ENCODE measurements at regions of chr1 and their contacts with region 1.

Region 1: GRCh38 chr1:155084722-155085503 is 6.3 kb downstream of the EFNA3 start:
- DNase-seq: peak; percentile 94
- H3K4me3 ChIP-seq: peak overlapping the region; percentile 77 to 79
- H3K27ac ChIP-seq: peak overlapping the region; percentile 69 to 94
- H3K4me1 ChIP-seq: peaks cover 13 to 26% of the 10 kb centered on the region in 2 experiments; a peak in 3 of 4 replicates
- H3K27me3 ChIP-seq: peaks cover 15% of the 10 kb centered on the region
- CTCF ChIP-seq: peak; percentile 82
- EP300 ChIP-seq: peak in 1 of 2 experiments; percentile 26; a peak in 1 of 4 replicates
- RAD21 ChIP-seq: peak; percentile 96

Region 2: DNA sequence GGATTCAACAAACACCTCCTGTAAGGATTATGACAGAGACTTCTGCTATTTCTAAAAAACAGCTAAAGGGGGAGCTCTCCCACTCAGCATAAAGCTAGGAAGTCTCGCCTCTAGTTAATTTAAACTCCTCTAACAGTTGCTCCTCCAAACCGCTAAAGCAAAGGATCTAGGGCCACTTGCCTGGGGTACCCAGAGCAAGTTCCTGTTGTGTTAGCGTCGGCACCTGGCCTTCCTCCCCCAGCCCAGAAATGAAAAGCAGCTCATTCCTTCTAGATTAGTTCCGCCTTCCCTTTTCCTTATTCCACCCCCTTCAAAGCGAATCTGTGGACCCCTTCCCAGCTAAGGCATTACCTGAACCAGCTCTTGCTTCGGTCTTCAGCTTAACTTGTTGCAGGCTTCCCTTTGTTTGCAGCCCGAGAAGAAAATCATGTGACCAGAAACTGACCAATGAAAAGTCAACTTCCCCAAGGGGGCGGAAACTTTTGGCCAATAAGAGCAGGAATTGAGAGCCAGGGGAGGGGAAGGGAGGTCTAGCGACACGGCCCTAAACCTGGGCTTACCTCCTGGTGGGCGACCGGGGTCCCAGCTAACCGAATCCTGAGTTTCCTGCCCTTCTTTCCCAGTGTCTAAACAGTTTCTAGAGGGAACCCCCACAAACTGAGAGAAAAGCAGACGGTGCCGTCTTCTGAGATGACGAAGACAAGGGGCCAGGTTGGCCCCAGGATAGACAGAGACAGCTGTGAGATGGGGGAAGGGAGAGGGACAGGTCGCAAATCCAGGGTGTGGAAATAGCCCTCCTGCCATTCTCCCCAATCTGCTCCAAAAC is 129.0 kb before region 1 on chr1 and contains the start of gene PBXIP1:
- CTCF ChIA-PET with region 1: interaction called, 21 read pairs
- POLR2A ChIA-PET with region 1: no interaction called
- DNase-seq: peak; percentile 94
- H3K4me3 ChIP-seq: peak within 1 kb of the TSS; percentile 74 to 79
- H3K27ac ChIP-seq: peak within 1 kb of the TSS; percentile 90 to 91
- H3K4me1 ChIP-seq: peaks cover 0 to 51% of the 10 kb centered on the region in 2 experiments; a peak in 3 of 4 replicates
- H3K27me3 ChIP-seq: no peaks in the 10 kb centered on the region
- CTCF ChIP-seq: peak; percentile 53
- EP300 ChIP-seq: no peak
- RAD21 ChIP-seq: peak; percentile 55
- polyA plus RNA-seq, gene PBXIP1: 55.9 and 64.3 TPM in 2 replicates

Region 3: DNA sequence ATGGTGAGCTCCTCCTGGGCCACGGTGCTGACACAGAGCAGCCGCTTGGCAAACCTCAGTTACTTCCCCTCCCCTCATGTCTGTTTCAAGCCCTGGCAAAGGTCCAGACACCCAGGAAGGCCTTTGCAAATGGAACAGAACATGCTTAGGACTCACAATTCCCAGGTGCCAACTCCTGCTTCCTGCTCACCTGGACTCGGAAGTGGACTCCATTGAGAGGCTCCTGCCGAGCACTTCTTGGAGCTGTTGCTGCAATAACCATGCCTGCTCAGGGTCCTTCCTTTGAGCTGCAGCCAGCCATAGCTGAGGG is 62.0 kb before region 1 on chr1:
- CTCF ChIA-PET with region 1: interaction called, 15 read pairs
- POLR2A ChIA-PET with region 1: no interaction called
- DNase-seq: peak; percentile 57
- H3K4me3 ChIP-seq: no peak overlapping the region
- H3K27ac ChIP-seq: no peak overlapping the region
- H3K4me1 ChIP-seq: peaks cover 0 to 4% of the 10 kb centered on the region in 2 experiments; a peak in 1 of 4 replicates
- H3K27me3 ChIP-seq: no peaks in the 10 kb centered on the region
- CTCF ChIP-seq: no peak
- EP300 ChIP-seq: no peak
- RAD21 ChIP-seq: no peak

Region 4: GRCh38 chr1:155070721-155071569 is 14.0 kb before region 1 on chr1:
- CTCF ChIA-PET with region 1: interaction called, 116 read pairs
- POLR2A ChIA-PET with region 1: interaction called, 3 read pairs
- DNase-seq: peak; percentile 90
- H3K4me3 ChIP-seq: peak overlapping the region in 1 of 2 experiments; percentile 32; a peak in 2 of 4 replicates
- H3K27ac ChIP-seq: peak overlapping the region in 1 of 2 experiments; percentile 51; a peak in 1 of 4 replicates
- H3K4me1 ChIP-seq: peaks cover 0 to 21% of the 10 kb centered on the region in 2 experiments; a peak in 1 of 4 replicates
- H3K27me3 ChIP-seq: no peaks in the 10 kb centered on the region
- CTCF ChIP-seq: peak; percentile 25; the same call in 1 of the 2 replicates
- EP300 ChIP-seq: no peak
- RAD21 ChIP-seq: no peak

Region 5: GRCh38 chr1:155135415-155136028 is 50.6 kb after region 1 on chr1 and contains the start of gene SLC50A1:
- CTCF ChIA-PET with region 1: interaction called, 43 read pairs
- POLR2A ChIA-PET with region 1: no interaction called
- DNase-seq: peak; percentile 97
- H3K4me3 ChIP-seq: peak within 1 kb of the TSS; percentile 72 to 73
- H3K27ac ChIP-seq: peak within 1 kb of the TSS; percentile 96 to 98
- H3K4me1 ChIP-seq: peaks cover 6 to 38% of the 10 kb centered on the region in 2 experiments; a peak in 3 of 4 replicates
- H3K27me3 ChIP-seq: no peaks in the 10 kb centered on the region
- CTCF ChIP-seq: no peak; the same call in 1 of the 2 replicates
- EP300 ChIP-seq: no peak; a peak in 1 of 4 replicates
- RAD21 ChIP-seq: no peak
- polyA plus RNA-seq, gene SLC50A1: 58.4 and 71.1 TPM in 2 replicates